ENCODE measurements at regions of chr17 and their contacts with region 1.

Region 1: GRCh38 chr17:8041249-8041928 is 2.5 kb downstream of the ALOX15B start:
- DNase-seq: peak; percentile 81
- ATAC-seq: peak; percentile 67 to 76; a peak in 5 of 6 replicates
- H3K4me3 ChIP-seq: no peak overlapping the region
- H3K27ac ChIP-seq: peak overlapping the region in 1 of 2 experiments; percentile 3; a peak in 1 of 6 replicates
- H3K4me1 ChIP-seq: no peaks in the 10 kb centered on the region
- CTCF ChIP-seq: peak; percentile 96
- EP300 ChIP-seq: no peak
- POLR2A ChIP-seq: no peak
- RAD21 ChIP-seq: peak; percentile 94 to 96

Region 2: DNA sequence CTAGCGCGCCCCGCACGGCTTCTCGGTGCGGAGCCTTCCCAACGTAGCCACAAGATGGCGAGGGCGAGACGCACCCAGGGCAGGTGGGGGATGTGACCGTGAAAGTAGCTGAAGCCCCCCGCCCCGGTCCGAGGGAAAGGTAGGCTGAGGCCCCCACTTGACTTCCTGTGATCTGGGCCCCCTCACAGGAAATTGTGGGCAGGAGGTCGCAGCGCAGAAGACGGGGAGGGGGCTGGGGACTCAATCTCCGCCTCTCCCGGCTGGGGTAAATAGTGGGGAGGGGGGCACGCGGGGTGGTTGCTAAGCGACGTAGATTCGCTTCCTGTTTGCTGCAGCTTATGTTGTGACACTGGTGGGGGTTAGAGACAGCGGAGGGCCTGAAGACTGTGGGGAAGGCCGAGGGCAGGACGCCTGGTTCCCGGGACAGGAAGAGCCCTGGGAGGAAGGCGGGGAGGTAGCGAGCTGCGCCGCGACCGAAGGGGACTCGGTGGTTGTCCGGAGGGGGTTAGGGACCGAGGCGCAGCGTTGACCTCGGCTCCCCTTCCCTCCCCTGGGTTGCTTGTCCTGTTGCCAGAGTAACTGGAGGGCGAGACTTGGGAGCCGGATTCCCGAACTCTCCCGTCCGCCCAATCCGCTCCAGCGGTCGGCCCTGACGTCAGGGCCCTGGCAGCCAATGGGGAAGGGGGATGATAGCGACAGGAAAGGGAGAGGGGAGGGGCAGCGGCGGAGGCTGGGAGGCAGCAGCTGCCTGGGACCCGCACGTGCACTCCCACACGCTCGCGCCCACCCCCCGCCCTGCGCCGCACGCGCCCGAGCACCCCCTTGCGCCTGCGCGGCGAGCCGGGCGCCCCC is 206.2 kb before region 1 on chr17:
- CTCF ChIA-PET with region 1: interaction called, 14 read pairs
- POLR2A ChIA-PET with region 1: no interaction called
- DNase-seq: peak; percentile 99
- ATAC-seq: peak; percentile 58 to 73
- H3K4me3 ChIP-seq: peak overlapping the region; percentile 60
- H3K27ac ChIP-seq: peak overlapping the region; percentile 82 to 89
- H3K4me1 ChIP-seq: peaks cover 36% of the 10 kb centered on the region
- CTCF ChIP-seq: peak; percentile 87
- EP300 ChIP-seq: no peak
- POLR2A ChIP-seq: peak; percentile 39
- RAD21 ChIP-seq: peak; percentile 83 to 88

Region 3: DNA sequence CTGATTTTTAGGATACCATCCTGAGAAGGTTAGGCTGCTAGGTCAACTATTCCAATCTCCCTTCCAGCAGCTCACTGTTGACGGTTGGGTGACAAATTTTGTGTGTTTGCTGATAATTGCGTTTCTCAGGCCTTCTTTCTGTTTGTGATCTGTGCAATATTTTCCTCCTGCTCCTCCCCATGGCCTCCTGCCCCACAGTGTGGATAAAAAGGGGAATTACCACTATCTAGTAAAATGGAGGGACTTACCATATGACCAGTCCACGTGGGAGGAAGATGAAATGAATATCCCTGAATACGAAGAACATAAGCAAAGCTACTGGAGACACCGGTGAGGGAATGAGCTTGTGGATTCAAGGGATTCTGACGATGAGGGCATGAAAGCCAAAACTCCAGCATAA is 143.6 kb before region 1 on chr17:
- CTCF ChIA-PET with region 1: interaction called, 36 read pairs
- POLR2A ChIA-PET with region 1: no interaction called
- DNase-seq: peak; percentile 55 to 72
- ATAC-seq: peak; percentile 87 to 92
- H3K4me3 ChIP-seq: no peak overlapping the region
- H3K27ac ChIP-seq: no peak overlapping the region
- H3K4me1 ChIP-seq: no peaks in the 10 kb centered on the region
- CTCF ChIP-seq: peak; percentile 64
- EP300 ChIP-seq: no peak
- POLR2A ChIP-seq: no peak
- RAD21 ChIP-seq: peak; percentile 81 to 88

Region 4: GRCh38 chr17:7944326-7944725 is 97.1 kb before region 1 on chr17:
- CTCF ChIA-PET with region 1: interaction called, 12 read pairs
- POLR2A ChIA-PET with region 1: no interaction called
- DNase-seq: no peak
- ATAC-seq: no peak
- H3K4me3 ChIP-seq: no peak overlapping the region
- H3K27ac ChIP-seq: no peak overlapping the region
- H3K4me1 ChIP-seq: no peaks in the 10 kb centered on the region
- CTCF ChIP-seq: no peak
- EP300 ChIP-seq: no peak
- POLR2A ChIP-seq: no peak
- RAD21 ChIP-seq: no peak

Region 5: DNA sequence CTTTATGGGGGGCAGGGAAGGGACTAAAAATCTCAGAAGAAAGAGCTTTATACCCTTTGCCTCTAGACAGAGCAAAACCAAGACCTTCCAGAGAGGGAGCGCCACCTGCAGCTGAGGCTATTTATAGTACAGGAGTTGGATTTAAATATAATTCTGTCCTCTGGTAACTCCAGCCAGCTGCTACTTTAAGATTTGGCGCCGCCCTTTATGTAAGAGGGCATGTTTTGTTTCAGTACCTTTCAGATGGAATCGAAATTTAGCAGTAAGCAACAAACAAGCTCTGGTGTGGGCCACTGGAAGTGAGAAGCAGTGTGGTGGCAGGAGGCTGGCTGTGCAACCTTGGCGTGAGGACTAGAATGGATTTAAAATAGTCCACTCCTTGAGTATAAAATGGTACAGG is 44.2 kb before region 1 on chr17:
- CTCF ChIA-PET with region 1: interaction called, 18 read pairs
- POLR2A ChIA-PET with region 1: no interaction called
- DNase-seq: peak; percentile 67 to 68
- ATAC-seq: peak; percentile 94 to 95
- H3K4me3 ChIP-seq: no peak overlapping the region
- H3K27ac ChIP-seq: no peak overlapping the region
- H3K4me1 ChIP-seq: no peaks in the 10 kb centered on the region
- CTCF ChIP-seq: peak; percentile 70
- EP300 ChIP-seq: no peak
- POLR2A ChIP-seq: no peak
- RAD21 ChIP-seq: peak; percentile 40 to 44; a peak in 3 of 5 replicates

Region 6: GRCh38 chr17:8029135-8029534 is 12.3 kb before region 1 on chr17:
- CTCF ChIA-PET with region 1: interaction called, 105 read pairs
- POLR2A ChIA-PET with region 1: interaction called, 7 read pairs
- DNase-seq: no peak
- ATAC-seq: peak in 1 of 2 experiments; percentile 32; a peak in 2 of 6 replicates
- H3K4me3 ChIP-seq: no peak overlapping the region
- H3K27ac ChIP-seq: no peak overlapping the region
- H3K4me1 ChIP-seq: peaks cover 7% of the 10 kb centered on the region; the same call in 2 of the 3 replicates
- CTCF ChIP-seq: no peak
- EP300 ChIP-seq: no peak
- POLR2A ChIP-seq: no peak
- RAD21 ChIP-seq: no peak